T-cell (primary cell): ENCODE measurements at regions of chr3 and their contacts with region 1.

Region 1: DNA sequence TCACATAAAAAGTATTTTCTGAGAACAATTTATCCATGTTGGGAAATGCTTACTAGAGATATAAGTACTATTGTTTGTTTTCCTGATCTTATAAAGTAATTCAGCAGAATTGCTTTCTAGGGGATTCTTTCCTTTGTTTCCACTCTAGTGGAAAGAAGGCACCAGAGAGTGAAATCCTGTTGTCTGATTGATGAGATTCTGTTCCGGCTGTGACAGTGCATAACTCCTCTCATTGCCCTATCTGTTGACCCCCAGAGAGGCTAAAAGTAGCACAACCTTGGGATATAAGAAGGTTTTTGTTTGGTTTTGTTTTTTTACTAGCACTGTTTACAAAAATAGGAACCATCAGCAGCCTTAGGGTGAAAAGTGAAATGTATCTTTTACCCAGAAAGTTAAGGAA is 114.1 kb downstream of the ALCAM start:
- DNase-seq: no peak
- ATAC-seq: no peak
- H3K4me3 ChIP-seq: no peak overlapping the region
- H3K4me3 Mint-ChIP-seq: no peak overlapping the region
- H3K27ac ChIP-seq: no peak overlapping the region
- H3K27ac Mint-ChIP-seq: no peak overlapping the region
- H3K4me1 ChIP-seq: no peaks in the 10 kb centered on the region
- H3K4me1 Mint-ChIP-seq: no peaks in the 10 kb centered on the region
- H3K27me3 ChIP-seq: no peaks in the 10 kb centered on the region
- H3K27me3 Mint-ChIP-seq: no peaks in the 10 kb centered on the region

Region 2: GRCh38 chr3:105367406-105368213 is 113.2 kb before region 1 on chr3:
- CTCF ChIA-PET with region 1: no interaction called
- POLR2A ChIA-PET with region 1: interaction called in 1 of 2 experiments, 12 read pairs
- DNase-seq: peak; percentile 12 to 81 (median 49)
- ATAC-seq: peak in 1 of 4 experiments; percentile 6
- H3K4me3 ChIP-seq: peak overlapping the region; percentile 69 to 84
- H3K4me3 Mint-ChIP-seq: peak overlapping the region; percentile 88 to 96 (median 94)
- H3K27ac ChIP-seq: peak overlapping the region; percentile 92
- H3K27ac Mint-ChIP-seq: peak overlapping the region; percentile 89 to 99
- H3K4me1 ChIP-seq: peaks cover 8 to 35% of the 10 kb centered on the region in 2 experiments
- H3K4me1 Mint-ChIP-seq: peaks cover 32 to 50% (median 34%) of the 10 kb centered on the region in 3 donors
- H3K27me3 ChIP-seq: peaks cover 2 to 16% of the 10 kb centered on the region in 2 experiments
- H3K27me3 Mint-ChIP-seq: peaks cover 11 to 21% of the 10 kb centered on the region in 2 donors

Region 3: GRCh38 chr3:105598047-105598796 is 117.5 kb after region 1 on chr3:
- CTCF ChIA-PET with region 1: no interaction called
- POLR2A ChIA-PET with region 1: no interaction called
- DNase-seq: no peak
- ATAC-seq: no peak
- H3K4me3 ChIP-seq: no peak overlapping the region
- H3K4me3 Mint-ChIP-seq: no peak overlapping the region
- H3K27ac ChIP-seq: no peak overlapping the region
- H3K27ac Mint-ChIP-seq: no peak overlapping the region
- H3K4me1 ChIP-seq: no peaks in the 10 kb centered on the region
- H3K4me1 Mint-ChIP-seq: no peaks in the 10 kb centered on the region
- H3K27me3 ChIP-seq: no peaks in the 10 kb centered on the region
- H3K27me3 Mint-ChIP-seq: peaks cover 0 to 3% of the 10 kb centered on the region in 2 donors